GM12878 (cell line): ENCODE measurements at regions of chr17 and their contacts with region 1.

Region 1: GRCh38 chr17:37791447-37792399 is 46.9 kb upstream of the HNF1B start:
- DNase-seq: no peak
- ATAC-seq: peak; percentile 98
- H3K4me3 ChIP-seq: no peak overlapping the region
- H3K27ac ChIP-seq: no peak overlapping the region
- H3K4me1 ChIP-seq: no peaks in the 10 kb centered on the region
- H3K27me3 ChIP-seq: no peaks in the 10 kb centered on the region
- CTCF ChIP-seq: peak; percentile 67 to 86 (median 82)
- EP300 ChIP-seq: no peak
- POLR2A ChIP-seq: no peak
- RAD21 ChIP-seq: peak; percentile 94

Region 2: GRCh38 chr17:37609170-37610040 is 182.3 kb before region 1 on chr17 and contains the start of gene SYNRG:
- CTCF ChIA-PET with region 1: interaction called, 10 read pairs
- POLR2A ChIA-PET with region 1: no interaction called
- RAD21 ChIA-PET with region 1: interaction called, 4 read pairs
- SMC1A ChIA-PET with region 1: interaction called, 19 read pairs
- in situ Hi-C with region 1: no loop called
- intact Hi-C with region 1: loop called (anchors 5 kb)
- DNase-seq: peak; percentile 81
- ATAC-seq: peak; percentile 93
- H3K4me3 ChIP-seq: peak within 1 kb of the TSS; percentile 78
- H3K27ac ChIP-seq: peak within 1 kb of the TSS; percentile 89
- H3K4me1 ChIP-seq: peaks cover 8% of the 10 kb centered on the region; the same call in 1 of the 2 replicates
- H3K27me3 ChIP-seq: no peaks in the 10 kb centered on the region
- CTCF ChIP-seq: peak; percentile 42 to 49 (median 47); a peak in 4 of 6 replicates
- EP300 ChIP-seq: 0 out of 4 replicates have a peak, but pooled peaks of 1 of the 2 experiments have one; percentile 9
- POLR2A ChIP-seq: peak; percentile 97
- RAD21 ChIP-seq: peak; percentile 23; the same call in 1 of the 2 replicates
- polyA plus RNA-seq, gene SYNRG: 5.2 to 5.8 TPM

Region 3: GRCh38 chr17:37671824-37672547 is 119.7 kb before region 1 on chr17:
- CTCF ChIA-PET with region 1: interaction called, 10 read pairs
- POLR2A ChIA-PET with region 1: no interaction called
- RAD21 ChIA-PET with region 1: no interaction called
- SMC1A ChIA-PET with region 1: interaction called, 3 read pairs
- in situ Hi-C with region 1: no loop called
- intact Hi-C with region 1: no loop called
- DNase-seq: no peak
- ATAC-seq: no peak
- H3K4me3 ChIP-seq: no peak overlapping the region
- H3K27ac ChIP-seq: no peak overlapping the region
- H3K4me1 ChIP-seq: no peaks in the 10 kb centered on the region
- H3K27me3 ChIP-seq: no peaks in the 10 kb centered on the region; a peak in 1 of 4 replicates
- CTCF ChIP-seq: no peak
- EP300 ChIP-seq: no peak
- POLR2A ChIP-seq: no peak
- RAD21 ChIP-seq: no peak

Region 4: DNA sequence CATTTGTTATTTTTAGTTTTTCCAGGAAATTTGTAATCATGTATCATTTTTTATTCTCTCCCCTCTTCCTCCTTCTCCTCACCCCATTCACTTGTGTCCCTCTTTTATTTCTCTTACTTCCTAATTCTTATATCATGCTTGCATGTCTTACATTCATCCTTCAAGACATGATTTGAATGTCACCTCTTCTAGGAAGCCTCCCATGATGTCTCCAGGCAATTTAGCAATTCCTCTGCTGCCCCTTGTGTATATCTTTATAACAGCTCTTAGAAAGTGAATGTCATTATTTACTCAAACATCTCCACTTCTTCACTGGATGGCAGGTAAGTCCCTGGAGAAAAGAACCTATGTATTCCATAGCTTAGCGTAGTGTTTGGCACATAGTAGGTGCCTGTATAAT is 54.6 kb before region 1 on chr17:
- CTCF ChIA-PET with region 1: interaction called, 9 read pairs
- POLR2A ChIA-PET with region 1: no interaction called
- RAD21 ChIA-PET with region 1: interaction called, 3 read pairs
- SMC1A ChIA-PET with region 1: interaction called, 8 read pairs
- in situ Hi-C with region 1: loop called (anchors 10 kb)
- intact Hi-C with region 1: no loop called
- DNase-seq: no peak
- ATAC-seq: peak; percentile 41
- H3K4me3 ChIP-seq: no peak overlapping the region
- H3K27ac ChIP-seq: no peak overlapping the region
- H3K4me1 ChIP-seq: 0 out of 2 replicates have a peak, but pooled peaks cover 3% of the 10 kb centered on the region
- H3K27me3 ChIP-seq: peaks cover 0 to 8% of the 10 kb centered on the region in 2 experiments; a peak in 2 of 4 replicates
- CTCF ChIP-seq: peak in 2 of 3 experiments; percentile 14 to 19; a peak in 1 of 6 replicates
- EP300 ChIP-seq: no peak
- POLR2A ChIP-seq: no peak
- RAD21 ChIP-seq: 0 out of 2 replicates have a peak, but pooled peaks have one; percentile 22

Region 5: DNA sequence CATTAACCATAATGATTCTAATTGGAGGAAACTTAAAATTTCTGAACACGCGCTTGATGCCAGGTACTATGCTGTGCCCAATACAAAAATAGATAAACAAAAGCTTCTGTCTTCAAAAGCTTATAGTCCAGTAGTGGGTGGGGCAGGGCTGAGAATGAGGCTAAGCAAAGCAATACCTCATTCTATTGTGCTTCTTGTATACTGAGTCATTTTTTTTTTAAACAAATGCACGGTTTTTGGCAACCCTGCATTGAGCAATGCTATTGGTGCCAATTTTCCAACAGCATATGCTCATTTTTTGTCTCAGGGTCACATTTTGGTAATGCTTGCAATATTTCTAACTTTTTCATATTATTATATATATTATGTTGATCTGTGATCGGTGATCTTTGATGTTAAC is 12.2 kb before region 1 on chr17:
- CTCF ChIA-PET with region 1: interaction called, 36 read pairs
- POLR2A ChIA-PET with region 1: no interaction called
- RAD21 ChIA-PET with region 1: interaction called, 16 read pairs
- SMC1A ChIA-PET with region 1: interaction called, 27 read pairs
- in situ Hi-C with region 1: no loop called
- intact Hi-C with region 1: no loop called
- DNase-seq: no peak
- ATAC-seq: no peak
- H3K4me3 ChIP-seq: no peak overlapping the region
- H3K27ac ChIP-seq: no peak overlapping the region
- H3K4me1 ChIP-seq: peaks cover 7% of the 10 kb centered on the region
- H3K27me3 ChIP-seq: no peaks in the 10 kb centered on the region
- CTCF ChIP-seq: no peak
- EP300 ChIP-seq: no peak
- POLR2A ChIP-seq: no peak
- RAD21 ChIP-seq: no peak

Region 6: DNA sequence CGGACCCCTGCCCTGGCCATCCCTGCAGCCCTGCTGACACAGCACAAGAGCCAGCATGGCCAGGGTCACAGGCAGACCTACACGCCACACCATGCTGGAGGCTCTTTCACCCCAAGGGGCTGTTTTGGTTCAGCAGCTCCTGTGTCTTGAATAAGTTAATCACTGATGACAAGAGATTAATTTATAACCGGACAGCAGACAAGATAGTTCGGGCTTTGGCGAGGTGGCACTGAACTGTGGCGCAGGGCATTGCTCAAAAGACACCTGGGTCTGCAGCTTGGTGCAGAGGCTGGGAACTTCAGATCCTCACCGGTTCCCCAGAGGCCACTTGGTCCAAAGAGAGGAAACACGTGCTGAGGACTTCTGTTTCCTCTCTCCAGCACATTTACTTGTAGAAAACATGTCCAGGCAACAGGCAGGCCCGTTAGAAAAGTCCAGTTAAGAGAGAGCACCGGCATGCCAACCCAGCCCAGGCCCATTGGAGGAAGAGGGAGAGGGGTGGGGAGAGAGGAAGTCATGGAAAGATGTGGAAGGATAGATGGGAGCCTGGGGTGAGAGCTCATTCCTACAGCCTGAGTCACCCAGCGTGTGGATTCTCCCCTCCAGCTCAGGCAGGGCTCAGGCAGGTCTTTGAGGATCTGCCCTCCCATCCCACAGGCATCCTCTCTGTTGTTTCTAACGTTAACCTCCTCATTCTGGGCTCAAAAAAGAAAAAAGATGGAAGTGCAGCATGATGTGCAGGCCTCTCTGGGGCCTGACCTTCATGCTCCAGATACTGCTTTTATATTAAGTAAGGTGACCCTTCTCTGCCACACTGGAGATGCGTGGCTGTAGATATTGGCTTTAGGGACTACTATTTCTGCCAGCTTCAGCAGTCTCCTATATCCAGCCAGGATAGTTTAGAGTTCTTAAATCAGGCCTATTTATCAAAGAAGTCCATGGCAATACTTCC is 33.1 kb after region 1 on chr17:
- CTCF ChIA-PET with region 1: interaction called, 11 read pairs
- POLR2A ChIA-PET with region 1: no interaction called
- RAD21 ChIA-PET with region 1: interaction called, 6 read pairs
- SMC1A ChIA-PET with region 1: interaction called, 5 read pairs
- in situ Hi-C with region 1: no loop called
- intact Hi-C with region 1: no loop called
- DNase-seq: no peak
- ATAC-seq: no peak; the same call in 1 of the 3 replicates
- H3K4me3 ChIP-seq: no peak overlapping the region
- H3K27ac ChIP-seq: no peak overlapping the region
- H3K4me1 ChIP-seq: peaks cover 52% of the 10 kb centered on the region
- H3K27me3 ChIP-seq: no peaks in the 10 kb centered on the region
- CTCF ChIP-seq: no peak
- EP300 ChIP-seq: no peak
- POLR2A ChIP-seq: no peak
- RAD21 ChIP-seq: no peak

Region 7: GRCh38 chr17:38510424-38511080 is 718.8 kb after region 1 on chr17:
- CTCF ChIA-PET with region 1: no interaction called
- POLR2A ChIA-PET with region 1: no interaction called
- RAD21 ChIA-PET with region 1: no interaction called
- SMC1A ChIA-PET with region 1: no interaction called
- in situ Hi-C with region 1: no loop called
- intact Hi-C with region 1: no loop called
- DNase-seq: no peak
- ATAC-seq: peak; percentile 39
- H3K4me3 ChIP-seq: no peak overlapping the region
- H3K27ac ChIP-seq: no peak overlapping the region
- H3K4me1 ChIP-seq: peaks cover 3% of the 10 kb centered on the region; the same call in 1 of the 2 replicates
- H3K27me3 ChIP-seq: peaks cover 4 to 10% of the 10 kb centered on the region in 2 experiments; a peak in 3 of 4 replicates
- CTCF ChIP-seq: no peak; a peak in 1 of 6 replicates
- EP300 ChIP-seq: no peak
- POLR2A ChIP-seq: no peak
- RAD21 ChIP-seq: no peak